ENCODE measurements at regions of chr3 and their contacts with region 1.

Region 1: DNA sequence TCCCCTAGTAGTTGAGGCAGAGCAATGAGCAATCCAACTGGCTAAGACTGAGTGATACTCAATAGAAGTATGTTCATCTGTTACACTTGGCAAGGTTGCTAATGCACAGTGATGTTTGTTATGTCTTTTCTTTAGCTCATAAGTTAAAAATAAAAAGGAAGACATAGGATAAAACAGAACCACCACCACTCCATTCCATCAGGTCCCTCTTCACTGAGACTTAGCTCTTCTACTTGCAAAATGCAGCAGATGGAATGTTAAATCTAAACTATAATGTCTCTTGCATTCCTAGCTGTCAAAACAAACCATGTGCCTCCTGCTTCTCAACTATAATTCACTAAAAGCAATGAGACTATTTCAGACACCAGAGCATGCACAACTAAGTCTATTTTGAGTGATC is 265.6 kb upstream of the UBE2E2 start:
- DNase-seq: no peak
- H3K4me3 Mint-ChIP-seq: no peak overlapping the region
- H3K27ac Mint-ChIP-seq: no peak overlapping the region
- H3K4me1 Mint-ChIP-seq: no peaks in the 10 kb centered on the region
- H3K27me3 Mint-ChIP-seq: no peaks in the 10 kb centered on the region
- CTCF ChIP-seq: no peak

Region 2: GRCh38 chr3:22922317-22922716 is 15.2 kb before region 1 on chr3:
- CTCF ChIA-PET with region 1: interaction called, 10 read pairs
- POLR2A ChIA-PET with region 1: no interaction called
- intact Hi-C with region 1: no loop called
- DNase-seq: peak; percentile 34
- H3K4me3 Mint-ChIP-seq: no peak overlapping the region
- H3K27ac Mint-ChIP-seq: no peak overlapping the region
- H3K4me1 Mint-ChIP-seq: peaks cover 7% of the 10 kb centered on the region
- H3K27me3 Mint-ChIP-seq: no peaks in the 10 kb centered on the region
- CTCF ChIP-seq: peak; percentile 26

Measured in MCF 10A (cell line).